ENCODE measurements at regions of chr20 and their contacts with region 1.

Region 1: GRCh38 chr20:50569864-50570836 is 60.0 kb downstream of the PTPN1 start:
- DNase-seq: peak; percentile 55 to 61
- ATAC-seq: peak; percentile 37 to 40
- H3K4me3 ChIP-seq: no peak overlapping the region
- H3K27ac ChIP-seq: peak overlapping the region; percentile 89 to 96 (median 94)
- H3K4me1 ChIP-seq: peaks cover 53 to 57% of the 10 kb centered on the region in 2 donors
- H3K27me3 ChIP-seq: no peaks in the 10 kb centered on the region
- CTCF ChIP-seq: peak in 3 of 5 experiments; percentile 21 to 42 (median 34)
- POLR2A ChIP-seq: no peak

Region 2: DNA sequence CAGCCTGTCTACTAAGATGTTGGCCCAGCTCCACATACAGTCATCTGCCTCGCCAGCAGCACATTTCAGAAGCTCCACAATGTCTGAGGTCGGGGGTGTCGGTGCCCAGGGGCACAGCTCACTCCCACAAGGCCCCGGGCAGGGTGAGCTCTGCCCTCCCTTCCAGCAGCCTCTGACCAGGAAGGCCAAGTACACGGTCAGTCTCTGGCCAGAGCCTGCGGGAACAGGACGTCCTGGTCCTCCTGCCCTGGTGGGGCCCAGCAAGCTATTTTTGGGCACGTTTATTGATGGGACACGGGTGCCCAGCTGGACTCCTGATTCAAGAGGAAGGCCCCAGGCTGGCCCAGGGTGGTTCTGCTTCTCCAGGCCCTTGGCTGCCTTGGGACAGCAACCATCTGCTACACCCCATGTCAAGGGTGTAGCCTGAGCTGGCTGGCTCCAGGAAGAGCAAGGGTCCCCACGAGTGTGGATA is 174.9 kb before region 1 on chr20:
- in situ Hi-C with region 1: no loop called
- intact Hi-C with region 1: no loop called
- DNase-seq: peak; percentile 97 to 99
- ATAC-seq: peak; percentile 32 to 42
- H3K4me3 ChIP-seq: no peak overlapping the region
- H3K27ac ChIP-seq: peak overlapping the region; percentile 93 to 100 (median 96)
- H3K4me1 ChIP-seq: peaks cover 59 to 66% of the 10 kb centered on the region in 2 donors
- H3K27me3 ChIP-seq: no peaks in the 10 kb centered on the region
- CTCF ChIP-seq: peak in 1 of 5 experiments; percentile 20
- POLR2A ChIP-seq: peak; percentile 81 to 90

Region 3: GRCh38 chr20:50509935-50510705 is 60.0 kb before region 1 on chr20 and contains the start of gene PTPN1:
- in situ Hi-C with region 1: loop called in 2 of 4 experiments (anchors 5 kb)
- intact Hi-C with region 1: no loop called
- DNase-seq: peak; percentile 98
- ATAC-seq: peak; percentile 90 to 97
- H3K4me3 ChIP-seq: peak within 1 kb of the TSS; percentile 90 to 100 (median 94)
- H3K27ac ChIP-seq: peak within 1 kb of the TSS; percentile 92 to 99 (median 96)
- H3K4me1 ChIP-seq: peaks cover 42 to 44% of the 10 kb centered on the region in 2 donors
- H3K27me3 ChIP-seq: no peaks in the 10 kb centered on the region
- CTCF ChIP-seq: peak in 2 of 5 experiments; percentile 11 to 25
- POLR2A ChIP-seq: peak; percentile 99
- total RNA-seq, gene PTPN1: 21.8 to 46.8 (median 44.4) TPM

Measured in gastrocnemius medialis (tissue), 4 donors.